AG04449 (cell line): ENCODE measurements at regions of chr21 and their contacts with region 1.

Region 1: GRCh38 chr21:25607151-25608043 is at the start of gene MRPL39:
- DNase-seq: peak; percentile 53
- H3K4me3 ChIP-seq: peak within 1 kb of the TSS; percentile 82
- CTCF ChIP-seq: peak; percentile 91

Region 2: GRCh38 chr21:24681456-24681855 is 925.9 kb before region 1 on chr21:
- CTCF ChIA-PET with region 1: no interaction called
- POLR2A ChIA-PET with region 1: no interaction called
- DNase-seq: no peak
- H3K4me3 ChIP-seq: no peak overlapping the region
- CTCF ChIP-seq: no peak

Region 3: GRCh38 chr21:25589887-25590286 is 17.5 kb before region 1 on chr21:
- CTCF ChIA-PET with region 1: interaction called, 12 read pairs
- POLR2A ChIA-PET with region 1: no interaction called
- DNase-seq: no peak
- H3K4me3 ChIP-seq: no peak overlapping the region
- CTCF ChIP-seq: no peak

Region 4: GRCh38 chr21:25639551-25640201 is 32.3 kb after region 1 on chr21:
- CTCF ChIA-PET with region 1: interaction called, 15 read pairs
- POLR2A ChIA-PET with region 1: no interaction called
- DNase-seq: no peak
- H3K4me3 ChIP-seq: peak overlapping the region; percentile 64
- CTCF ChIP-seq: peak; percentile 58

Region 5: DNA sequence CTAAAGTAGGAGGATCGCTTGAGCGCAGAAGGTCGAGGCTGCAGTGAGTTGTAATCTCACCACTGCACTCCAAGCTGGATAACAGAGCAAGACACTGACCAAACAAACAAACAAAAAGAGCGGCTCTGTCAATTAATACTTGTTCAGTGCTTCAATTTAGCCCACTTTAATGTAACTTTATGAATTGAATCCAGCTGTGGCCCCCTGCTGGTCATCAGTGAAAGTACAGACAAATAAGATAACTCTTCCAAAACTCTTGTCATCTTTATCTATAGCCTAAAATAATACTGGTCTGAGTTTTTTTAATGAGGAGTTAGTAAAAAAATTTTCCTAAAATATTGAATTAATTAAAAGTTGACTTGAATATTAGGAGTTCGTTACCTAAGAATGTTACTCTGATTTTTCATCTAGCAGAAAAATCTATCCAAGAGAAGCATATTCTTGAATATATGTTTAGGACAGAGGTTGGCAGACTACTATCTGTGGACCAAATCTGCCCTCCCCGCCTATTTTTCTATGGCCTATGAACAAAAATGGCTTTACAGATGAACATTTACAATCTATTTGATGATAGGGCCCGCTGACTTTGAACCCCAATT is 101.2 kb after region 1 on chr21:
- CTCF ChIA-PET with region 1: interaction called, 78 read pairs
- POLR2A ChIA-PET with region 1: no interaction called
- DNase-seq: no peak
- H3K4me3 ChIP-seq: no peak overlapping the region
- CTCF ChIP-seq: peak; percentile 64

Region 6: GRCh38 chr21:25734904-25735645 is 127.7 kb after region 1 on chr21 and contains the starts of genes ATP5PF and GABPA:
- CTCF ChIA-PET with region 1: interaction called, 18 read pairs
- POLR2A ChIA-PET with region 1: no interaction called
- DNase-seq: peak; percentile 95
- H3K4me3 ChIP-seq: peak within 1 kb of the TSS; percentile 97
- CTCF ChIP-seq: peak; percentile 21

Region 7: GRCh38 chr21:25862596-25862995 is 255.2 kb after region 1 on chr21:
- CTCF ChIA-PET with region 1: interaction called, 12 read pairs
- POLR2A ChIA-PET with region 1: no interaction called
- DNase-seq: no peak
- H3K4me3 ChIP-seq: no peak overlapping the region
- CTCF ChIP-seq: peak; percentile 49